ENCODE measurements at regions of chr5 and their contacts with region 1.

Region 1: GRCh38 chr5:9544502-9545135 is 1.3 kb downstream of the SEMA5A start:
- DNase-seq: peak; percentile 85
- H3K4me3 ChIP-seq: peak overlapping the region; percentile 55 to 86 (median 78)
- H3K27ac ChIP-seq: peak overlapping the region; percentile 76
- H3K4me1 ChIP-seq: peaks cover 20% of the 10 kb centered on the region
- H3K27me3 ChIP-seq: no peaks in the 10 kb centered on the region
- CTCF ChIP-seq: peak; percentile 77 to 94

Region 2: DNA sequence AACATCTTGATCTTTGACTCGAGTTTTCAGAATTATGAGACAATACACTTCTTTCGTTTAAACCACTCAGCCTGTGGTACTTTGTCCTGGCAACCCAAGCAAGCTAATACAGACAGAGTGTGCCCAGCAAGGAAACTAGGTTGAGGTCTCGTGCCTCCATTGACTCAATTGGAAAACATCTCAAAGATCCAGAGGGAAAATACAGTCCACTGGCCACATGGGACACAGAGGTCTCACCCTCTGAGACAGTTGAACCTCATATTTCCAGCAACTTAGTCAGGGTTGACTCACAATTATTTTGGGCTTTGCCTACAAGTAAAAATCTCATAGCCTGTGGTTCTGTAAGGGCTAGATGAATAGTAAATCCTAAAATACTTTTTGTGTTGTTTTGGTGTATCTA is 1044.2 kb before region 1 on chr5:
- CTCF ChIA-PET with region 1: no interaction called
- dilution Hi-C with region 1: no loop called
- in situ Hi-C with region 1: no loop called
- intact Hi-C with region 1: no loop called
- DNase-seq: no peak
- H3K4me3 ChIP-seq: no peak overlapping the region
- H3K27ac ChIP-seq: no peak overlapping the region
- H3K4me1 ChIP-seq: no peaks in the 10 kb centered on the region
- H3K27me3 ChIP-seq: no peaks in the 10 kb centered on the region
- CTCF ChIP-seq: no peak

Region 3: DNA sequence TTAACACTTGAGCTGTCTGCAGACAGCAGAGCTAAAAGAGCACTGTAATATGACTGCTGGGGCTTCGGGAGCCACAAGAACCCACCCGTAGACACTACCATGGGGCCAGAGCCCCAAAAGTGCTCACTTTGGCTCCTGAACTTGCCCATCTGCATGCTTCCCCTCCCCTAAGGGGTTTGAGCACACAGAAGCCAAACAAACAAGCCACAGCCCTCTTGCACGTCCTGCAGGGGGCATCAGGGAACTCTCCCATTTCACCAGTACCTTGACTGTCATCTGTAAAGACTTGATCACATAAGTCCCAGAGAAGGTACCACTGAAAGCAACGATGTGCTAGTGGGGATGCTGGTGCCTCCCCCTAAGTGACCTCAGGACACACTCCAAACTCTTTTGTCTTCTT is 680.6 kb before region 1 on chr5:
- CTCF ChIA-PET with region 1: no interaction called
- dilution Hi-C with region 1: no loop called
- in situ Hi-C with region 1: loop called in 1 of 2 experiments (anchors 25 kb)
- intact Hi-C with region 1: loop called (anchors 10 kb)
- DNase-seq: peak; percentile 40
- H3K4me3 ChIP-seq: no peak overlapping the region
- H3K27ac ChIP-seq: no peak overlapping the region
- H3K4me1 ChIP-seq: peaks cover 4% of the 10 kb centered on the region
- H3K27me3 ChIP-seq: no peaks in the 10 kb centered on the region
- CTCF ChIP-seq: peak; percentile 70 to 82

Region 4: GRCh38 chr5:9173281-9174048 is 371.2 kb before region 1 on chr5:
- CTCF ChIA-PET with region 1: no interaction called
- dilution Hi-C with region 1: no loop called
- in situ Hi-C with region 1: no loop called
- intact Hi-C with region 1: loop called (anchors 5 kb)
- DNase-seq: peak; percentile 87
- H3K4me3 ChIP-seq: no peak overlapping the region
- H3K27ac ChIP-seq: peak overlapping the region; percentile 75
- H3K4me1 ChIP-seq: peaks cover 37% of the 10 kb centered on the region
- H3K27me3 ChIP-seq: no peaks in the 10 kb centered on the region
- CTCF ChIP-seq: no peak

Region 5: DNA sequence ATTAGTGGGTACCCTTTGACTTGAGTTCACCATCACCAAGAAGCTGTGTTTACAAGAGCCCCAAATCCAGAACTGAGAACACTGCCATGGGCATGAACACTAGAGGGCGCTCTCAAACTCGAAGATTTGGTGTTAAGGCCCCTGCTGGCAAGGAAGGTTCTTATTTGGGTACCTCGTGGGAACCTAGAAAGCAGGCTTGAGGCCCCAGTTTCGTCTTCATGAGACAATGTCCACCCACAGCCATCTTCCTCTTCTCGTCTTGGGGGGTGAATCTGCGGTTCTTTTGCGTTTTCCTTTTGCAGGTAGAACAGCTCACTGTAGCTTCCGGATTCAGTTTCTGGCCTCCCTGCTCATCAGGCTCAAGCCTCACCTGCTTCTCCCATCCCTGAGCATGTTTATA is 182.8 kb before region 1 on chr5:
- CTCF ChIA-PET with region 1: no interaction called
- dilution Hi-C with region 1: loop called (anchors 25 kb)
- in situ Hi-C with region 1: loop called in 1 of 2 experiments (anchors 25 kb)
- intact Hi-C with region 1: loop called (anchors 1 kb)
- DNase-seq: peak; percentile 66
- H3K4me3 ChIP-seq: no peak overlapping the region
- H3K27ac ChIP-seq: no peak overlapping the region
- H3K4me1 ChIP-seq: peaks cover 11% of the 10 kb centered on the region
- H3K27me3 ChIP-seq: no peaks in the 10 kb centered on the region
- CTCF ChIP-seq: peak; percentile 85 to 92

Region 6: GRCh38 chr5:9573796-9574195 is 29.2 kb after region 1 on chr5:
- CTCF ChIA-PET with region 1: no interaction called
- dilution Hi-C with region 1: no loop called
- in situ Hi-C with region 1: no loop called
- intact Hi-C with region 1: no loop called
- DNase-seq: no peak
- H3K4me3 ChIP-seq: no peak overlapping the region
- H3K27ac ChIP-seq: no peak overlapping the region
- H3K4me1 ChIP-seq: no peaks in the 10 kb centered on the region
- H3K27me3 ChIP-seq: no peaks in the 10 kb centered on the region
- CTCF ChIP-seq: no peak

Region 7: GRCh38 chr5:9632495-9632894 is 87.9 kb after region 1 on chr5:
- CTCF ChIA-PET with region 1: no interaction called
- dilution Hi-C with region 1: no loop called
- in situ Hi-C with region 1: no loop called
- intact Hi-C with region 1: no loop called
- DNase-seq: no peak
- H3K4me3 ChIP-seq: no peak overlapping the region
- H3K27ac ChIP-seq: no peak overlapping the region
- H3K4me1 ChIP-seq: no peaks in the 10 kb centered on the region
- H3K27me3 ChIP-seq: no peaks in the 10 kb centered on the region
- CTCF ChIP-seq: no peak

Region 8: DNA sequence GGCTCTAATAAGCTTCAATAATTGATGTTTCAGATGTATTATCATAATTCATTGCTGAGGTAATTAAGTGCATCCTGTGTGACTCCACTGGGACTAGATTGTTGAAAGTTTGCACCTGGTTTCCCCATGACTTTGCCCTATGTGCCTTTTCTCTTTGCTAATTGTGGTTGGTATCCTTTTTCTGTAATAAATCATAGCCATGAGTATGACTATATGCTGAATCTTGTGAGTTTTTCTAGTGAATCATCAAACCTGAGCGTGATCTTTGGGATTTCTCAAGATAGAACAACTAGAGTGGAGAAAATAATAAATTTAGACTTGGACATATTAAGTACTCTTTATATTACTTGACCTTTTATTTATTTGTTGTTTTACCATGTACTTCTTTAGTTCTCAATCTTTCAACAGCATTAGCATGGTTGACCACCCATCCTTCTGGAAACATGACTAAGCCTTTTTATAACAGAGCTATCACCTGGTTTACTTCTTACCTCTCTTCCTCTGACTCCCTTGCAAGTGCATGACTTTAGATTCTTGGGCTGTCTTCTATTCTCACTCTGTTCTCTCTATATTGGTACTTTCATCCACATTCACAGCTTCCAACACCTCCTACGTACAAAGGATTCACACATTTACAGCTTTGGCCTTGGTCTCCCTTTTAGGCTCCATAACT is 325.1 kb after region 1 on chr5:
- CTCF ChIA-PET with region 1: no interaction called
- dilution Hi-C with region 1: no loop called
- in situ Hi-C with region 1: no loop called
- intact Hi-C with region 1: loop called (anchors 5 kb)
- DNase-seq: peak; percentile 77
- H3K4me3 ChIP-seq: no peak overlapping the region
- H3K27ac ChIP-seq: peak overlapping the region; percentile 41
- H3K4me1 ChIP-seq: peaks cover 12% of the 10 kb centered on the region
- H3K27me3 ChIP-seq: no peaks in the 10 kb centered on the region
- CTCF ChIP-seq: no peak